PC-3 (cell line): ENCODE measurements at regions of chr1 and their contacts with region 1.

Region 1: GRCh38 chr1:227437495-227438008 is 119.3 kb upstream of the CDC42BPA start:
- DNase-seq: peak; percentile 90
- ATAC-seq: peak; percentile 84
- H3K4me3 ChIP-seq: peak overlapping the region; percentile 65
- H3K27ac ChIP-seq: no peak overlapping the region
- H3K4me1 ChIP-seq: no peaks in the 10 kb centered on the region
- H3K27me3 ChIP-seq: no peaks in the 10 kb centered on the region
- CTCF ChIP-seq: peak; percentile 98

Region 2: GRCh38 chr1:226827968-226828513 is 609.5 kb before region 1 on chr1:
- CTCF ChIA-PET with region 1: no interaction called
- POLR2A ChIA-PET with region 1: no interaction called
- intact Hi-C with region 1: loop called (anchors 10 kb)
- DNase-seq: peak; percentile 99
- ATAC-seq: peak; percentile 100
- H3K4me3 ChIP-seq: no peak overlapping the region
- H3K27ac ChIP-seq: peak overlapping the region; percentile 3; the same call in 1 of the 2 replicates
- H3K4me1 ChIP-seq: peaks cover 15% of the 10 kb centered on the region
- H3K27me3 ChIP-seq: no peaks in the 10 kb centered on the region
- CTCF ChIP-seq: peak; percentile 99

Region 3: DNA sequence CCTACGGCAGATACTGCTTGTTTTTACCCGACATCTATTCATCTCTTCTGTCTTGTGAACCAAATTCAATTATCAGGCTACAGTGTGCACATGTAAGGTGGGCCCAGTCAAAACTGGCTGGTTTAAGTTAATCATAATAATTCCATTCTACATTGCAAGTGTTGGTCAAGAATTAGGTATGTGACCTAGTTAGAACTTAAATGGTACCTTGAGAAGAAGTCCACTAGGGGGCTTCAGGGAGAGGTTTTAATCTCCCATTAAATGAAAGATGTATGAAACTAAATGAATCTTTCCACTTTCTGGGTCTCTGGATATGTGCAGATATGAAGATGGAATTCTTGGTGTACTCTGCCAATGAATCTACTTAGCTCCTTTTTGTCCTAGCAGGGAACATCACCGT is 306.4 kb before region 1 on chr1:
- CTCF ChIA-PET with region 1: no interaction called
- POLR2A ChIA-PET with region 1: no interaction called
- intact Hi-C with region 1: loop called (anchors 1 kb)
- DNase-seq: peak; percentile 83
- ATAC-seq: peak; percentile 84
- H3K4me3 ChIP-seq: no peak overlapping the region
- H3K27ac ChIP-seq: no peak overlapping the region
- H3K4me1 ChIP-seq: no peaks in the 10 kb centered on the region
- H3K27me3 ChIP-seq: no peaks in the 10 kb centered on the region
- CTCF ChIP-seq: peak; percentile 97

Region 4: GRCh38 chr1:227234998-227235405 is 202.6 kb before region 1 on chr1:
- CTCF ChIA-PET with region 1: no interaction called
- POLR2A ChIA-PET with region 1: no interaction called
- intact Hi-C with region 1: loop called (anchors 1 kb)
- DNase-seq: peak; percentile 95
- ATAC-seq: peak; percentile 97
- H3K4me3 ChIP-seq: no peak overlapping the region
- H3K27ac ChIP-seq: no peak overlapping the region
- H3K4me1 ChIP-seq: no peaks in the 10 kb centered on the region
- H3K27me3 ChIP-seq: no peaks in the 10 kb centered on the region
- CTCF ChIP-seq: peak; percentile 98

Region 5: DNA sequence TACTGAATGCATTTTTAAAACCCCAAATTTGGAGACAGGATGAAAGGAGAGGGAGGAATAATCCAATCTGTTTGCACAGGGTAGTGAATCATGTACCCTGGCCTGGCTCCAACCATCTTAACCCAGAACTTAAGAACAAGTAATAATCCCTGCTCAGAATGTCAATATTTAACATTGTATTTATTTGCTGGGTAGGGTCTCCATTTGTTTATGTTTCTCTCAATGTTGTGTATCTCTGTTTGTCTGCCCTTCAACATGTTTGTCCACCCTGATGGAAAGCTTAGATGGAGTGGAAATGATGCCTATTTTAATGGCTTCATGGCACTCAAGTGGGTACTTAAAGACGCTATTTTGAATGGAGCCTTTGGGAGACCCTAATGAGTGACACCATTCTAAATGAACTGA is 64.8 kb before region 1 on chr1:
- CTCF ChIA-PET with region 1: no interaction called
- POLR2A ChIA-PET with region 1: no interaction called
- intact Hi-C with region 1: loop called (anchors 5 kb)
- DNase-seq: peak; percentile 98
- ATAC-seq: peak; percentile 60
- H3K4me3 ChIP-seq: no peak overlapping the region
- H3K27ac ChIP-seq: peak overlapping the region; percentile 35
- H3K4me1 ChIP-seq: peaks cover 46% of the 10 kb centered on the region
- H3K27me3 ChIP-seq: no peaks in the 10 kb centered on the region
- CTCF ChIP-seq: no peak